Activated naive CD4-positive, alpha-beta T cell treated with anti-CD3 and anti-CD28 coated beads for 36 hours (primary cell): ENCODE measurements at regions of chr7 and their contacts with region 1.

Region 1: DNA sequence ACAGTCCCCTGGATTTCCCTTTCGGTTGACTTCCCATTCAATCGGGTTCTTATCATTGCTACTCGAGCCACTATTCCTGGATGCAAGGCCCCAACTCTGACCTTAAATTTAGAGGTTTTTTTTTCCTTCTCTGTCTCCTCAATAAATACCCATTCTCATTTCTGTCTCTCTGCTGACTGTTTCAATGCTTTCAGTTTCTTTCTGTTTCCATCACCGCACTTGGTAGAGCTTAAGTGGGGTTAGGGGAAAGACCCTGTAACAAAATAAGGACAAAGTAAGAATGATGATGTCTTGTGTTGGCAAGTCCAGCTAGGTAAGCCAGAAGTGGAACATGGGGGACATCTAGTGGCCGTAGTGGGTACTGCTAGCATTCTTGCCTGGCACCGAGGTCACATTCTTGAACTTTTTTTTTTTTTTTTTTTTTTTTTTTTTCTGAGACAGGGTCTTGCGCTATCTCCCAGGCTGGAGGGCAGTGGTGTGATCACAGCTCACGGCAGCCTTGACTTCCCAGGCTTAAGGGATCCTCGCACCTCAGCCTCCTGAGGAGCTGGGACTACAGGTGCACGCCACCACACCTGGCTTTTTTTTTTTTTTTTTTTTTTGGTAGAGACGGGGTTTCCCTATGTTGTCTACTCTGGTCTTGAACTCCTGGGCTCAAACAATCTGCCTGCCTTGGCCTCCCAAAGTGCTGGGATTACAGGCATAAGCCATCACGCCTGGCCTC is 40.3 kb downstream of the ZC3HC1 start:
- DNase-seq: peak; percentile 98
- H3K4me3 Mint-ChIP-seq: no peak overlapping the region
- H3K27ac Mint-ChIP-seq: peak overlapping the region; percentile 64
- H3K4me1 Mint-ChIP-seq: peaks cover 13% of the 10 kb centered on the region
- H3K27me3 Mint-ChIP-seq: no peaks in the 10 kb centered on the region

Region 2: DNA sequence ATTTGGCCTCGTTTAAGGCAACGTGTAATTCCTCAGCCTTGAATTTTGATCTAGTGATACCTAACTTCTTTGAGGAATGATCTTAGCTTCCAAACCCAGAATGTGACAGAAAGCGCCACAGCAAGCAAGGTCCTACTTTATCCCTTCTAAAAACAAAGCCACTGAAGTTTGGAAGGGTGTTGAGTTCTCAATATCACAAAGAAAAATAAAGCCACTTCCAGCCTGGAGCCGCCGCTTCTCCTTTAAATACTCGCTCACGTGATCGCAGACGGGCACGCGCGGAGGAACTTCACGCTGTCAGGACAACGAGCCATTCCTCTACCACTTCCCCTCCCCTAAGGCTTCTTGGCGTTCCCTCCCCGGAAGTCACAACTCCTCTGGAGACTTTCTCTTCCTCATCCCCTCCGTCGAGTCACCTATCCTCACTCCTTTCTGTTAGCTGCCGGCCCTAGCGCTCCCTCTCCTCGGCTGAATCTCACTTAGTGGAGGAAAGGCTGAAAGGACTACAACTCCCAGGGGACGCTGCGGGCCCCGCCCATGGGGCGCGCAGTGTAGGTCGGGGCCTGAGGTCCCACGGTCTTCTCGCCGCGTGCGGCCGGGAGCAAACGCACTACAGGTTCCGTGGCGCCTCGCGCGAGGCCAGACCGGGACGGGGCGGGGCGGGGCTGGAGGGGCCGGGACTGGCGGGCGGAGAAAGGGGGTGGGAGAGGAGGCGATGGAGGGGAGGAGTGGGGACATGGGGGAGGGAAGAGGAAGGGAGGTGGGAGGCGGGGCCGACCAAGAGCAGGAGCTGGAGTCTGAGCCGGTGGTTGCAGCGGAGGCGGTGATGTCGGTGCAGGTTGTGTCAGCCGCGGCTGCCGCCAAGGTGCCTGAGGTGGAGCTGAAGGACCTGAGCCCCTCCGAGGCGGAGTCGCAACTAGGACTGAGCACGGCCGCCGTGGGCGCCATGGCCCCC is 786.3 kb before region 1 on chr7 and contains the start of gene AHCYL2:
- CTCF ChIA-PET with region 1: interaction called, 3 read pairs
- intact Hi-C with region 1: loop called (anchors 2 kb)
- DNase-seq: peak; percentile 99
- H3K4me3 Mint-ChIP-seq: peak within 1 kb of the TSS; percentile 88
- H3K27ac Mint-ChIP-seq: peak within 1 kb of the TSS; percentile 90
- H3K4me1 Mint-ChIP-seq: peaks cover 31% of the 10 kb centered on the region
- H3K27me3 Mint-ChIP-seq: no peaks in the 10 kb centered on the region
- total RNA-seq, gene AHCYL2: 29.1 to 30.4 TPM

Region 3: DNA sequence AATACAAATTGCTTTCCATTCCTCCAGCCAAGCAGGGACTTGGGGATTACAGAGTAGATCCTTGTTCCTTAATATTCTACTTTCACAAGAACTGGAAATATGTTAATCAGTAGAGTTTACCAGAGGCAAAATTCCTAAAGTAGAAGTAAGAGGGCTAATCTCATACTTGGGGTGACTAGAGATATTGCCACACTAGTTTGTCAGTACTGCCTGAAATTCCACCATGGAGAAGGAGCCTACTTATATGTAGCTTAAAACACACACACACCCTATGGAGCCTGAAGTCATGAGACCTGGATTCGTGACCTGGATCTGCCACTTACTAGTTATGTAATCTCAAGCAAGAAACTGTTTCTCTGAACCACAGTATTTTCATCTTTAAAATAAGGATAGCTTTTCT is 542.8 kb before region 1 on chr7:
- CTCF ChIA-PET with region 1: interaction called, 3 read pairs
- intact Hi-C with region 1: loop called (anchors 2 kb)
- DNase-seq: no peak
- H3K4me3 Mint-ChIP-seq: no peak overlapping the region
- H3K27ac Mint-ChIP-seq: no peak overlapping the region
- H3K4me1 Mint-ChIP-seq: peaks cover 12% of the 10 kb centered on the region
- H3K27me3 Mint-ChIP-seq: no peaks in the 10 kb centered on the region

Region 4: DNA sequence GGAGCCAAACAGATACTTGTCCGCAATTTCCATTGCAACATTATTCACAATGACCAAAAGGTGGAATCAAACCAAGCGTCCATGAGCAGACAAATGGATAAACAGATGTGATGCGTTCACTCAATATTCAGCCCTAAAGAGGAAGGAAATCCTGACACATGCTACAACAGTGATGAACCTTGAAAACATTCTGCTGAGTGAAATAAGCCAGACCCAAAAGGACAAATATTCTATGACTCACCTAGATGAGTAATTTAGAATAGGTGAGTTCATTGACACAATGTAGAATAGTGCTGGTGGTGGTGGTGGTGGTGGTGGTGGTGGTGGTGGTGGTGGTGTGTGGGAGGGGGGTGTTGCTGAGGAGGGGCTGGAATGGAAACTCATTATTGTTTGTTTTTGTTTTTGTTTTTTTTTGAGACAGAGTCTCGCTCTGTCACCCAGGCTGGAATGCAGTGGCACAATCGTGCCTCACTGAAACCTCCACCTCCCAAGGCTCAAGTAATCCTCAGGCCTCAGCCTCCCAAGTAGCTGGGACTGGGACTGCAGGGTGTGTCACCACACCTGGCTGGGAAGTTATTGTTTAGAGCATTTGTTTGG is 480.0 kb before region 1 on chr7:
- CTCF ChIA-PET with region 1: no interaction called
- intact Hi-C with region 1: loop called (anchors 1 kb)
- DNase-seq: peak; percentile 71
- H3K4me3 Mint-ChIP-seq: no peak overlapping the region
- H3K27ac Mint-ChIP-seq: no peak overlapping the region
- H3K4me1 Mint-ChIP-seq: peaks cover 11% of the 10 kb centered on the region
- H3K27me3 Mint-ChIP-seq: peaks cover 3% of the 10 kb centered on the region

Region 5: DNA sequence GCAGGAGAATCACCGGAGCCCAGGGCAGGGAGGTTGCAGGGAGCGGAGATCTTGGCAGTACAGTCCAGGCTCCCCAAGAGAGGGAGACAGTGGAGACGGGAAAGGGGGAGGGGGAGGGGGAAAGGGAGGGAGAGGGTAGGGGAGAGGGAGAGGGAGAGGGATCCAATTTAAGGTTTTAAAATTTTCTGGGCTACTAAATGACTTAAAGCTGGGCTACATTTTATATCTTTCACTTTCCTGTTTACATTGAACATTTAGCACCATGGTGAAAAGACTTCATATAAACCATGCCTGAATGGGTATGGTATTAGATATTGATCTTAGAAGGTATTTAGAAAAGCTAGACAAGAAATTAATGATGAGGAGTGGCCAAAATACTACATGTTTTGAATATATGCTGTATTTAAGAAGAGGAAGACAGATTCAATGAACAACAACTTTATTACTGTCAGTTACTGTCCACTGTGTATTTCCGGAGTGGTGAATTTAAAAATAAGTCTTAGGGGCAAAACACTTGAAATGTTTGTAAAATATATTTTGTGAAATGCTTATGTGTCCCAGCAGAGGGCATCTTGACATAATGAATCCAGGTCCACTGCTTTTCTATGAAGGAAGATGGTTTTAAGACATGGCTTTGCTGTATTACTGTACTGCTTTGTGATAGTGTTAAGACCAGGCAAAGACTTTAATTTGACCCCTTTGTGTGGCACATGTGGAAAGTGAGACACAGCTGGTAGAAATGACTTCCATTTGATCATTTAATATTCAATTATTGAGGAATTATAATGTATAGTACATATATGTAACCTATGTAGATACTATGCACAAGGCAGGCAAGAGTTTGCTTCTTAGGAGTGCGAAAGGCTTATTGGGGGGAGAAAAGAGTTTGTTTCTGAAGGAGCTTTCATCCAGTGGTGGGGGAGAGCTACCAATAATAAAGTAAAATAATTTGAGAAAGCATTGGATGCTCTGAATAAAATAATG is 346.5 kb before region 1 on chr7:
- CTCF ChIA-PET with region 1: no interaction called
- intact Hi-C with region 1: loop called (anchors 1 kb)
- DNase-seq: no peak
- H3K4me3 Mint-ChIP-seq: no peak overlapping the region
- H3K27ac Mint-ChIP-seq: no peak overlapping the region
- H3K4me1 Mint-ChIP-seq: peaks cover 4% of the 10 kb centered on the region
- H3K27me3 Mint-ChIP-seq: no peaks in the 10 kb centered on the region

Region 6: DNA sequence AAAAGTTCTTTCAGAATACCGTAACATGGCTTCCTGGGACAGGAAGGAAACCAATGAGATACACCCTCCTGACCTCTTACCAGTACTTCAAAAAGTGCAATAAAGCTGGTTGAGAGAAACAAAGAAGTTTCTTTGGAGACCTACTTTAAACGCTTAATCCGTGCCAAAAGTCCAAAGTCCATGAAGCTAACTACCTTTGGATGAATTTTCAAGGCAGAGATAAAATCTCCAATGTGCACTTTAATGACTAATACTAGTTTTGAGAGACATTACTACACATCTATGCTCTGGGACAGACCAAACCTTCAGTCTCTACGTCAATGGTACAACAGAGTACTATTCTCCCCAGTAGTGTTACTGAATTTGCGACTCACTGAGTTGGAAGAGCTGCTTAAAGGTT is 104.2 kb before region 1 on chr7:
- CTCF ChIA-PET with region 1: no interaction called
- intact Hi-C with region 1: loop called (anchors 1 kb)
- DNase-seq: no peak
- H3K4me3 Mint-ChIP-seq: no peak overlapping the region
- H3K27ac Mint-ChIP-seq: peak overlapping the region; percentile 76
- H3K4me1 Mint-ChIP-seq: peaks cover 75% of the 10 kb centered on the region
- H3K27me3 Mint-ChIP-seq: no peaks in the 10 kb centered on the region